ENCODE measurements at regions of chr14 and their contacts with region 1.

Region 1: GRCh38 chr14:68911594-68912227 is 67.4 kb downstream of the ACTN1 start:
- DNase-seq: peak; percentile 56
- H3K4me3 ChIP-seq: no peak overlapping the region
- H3K27ac ChIP-seq: peak overlapping the region; percentile 47
- H3K27me3 ChIP-seq: no peaks in the 10 kb centered on the region
- CTCF ChIP-seq: peak; percentile 100

Region 2: GRCh38 chr14:68520637-68521556 is 390.8 kb before region 1 on chr14:
- CTCF ChIA-PET with region 1: no interaction called
- POLR2A ChIA-PET with region 1: no interaction called
- DNase-seq: no peak
- H3K4me3 ChIP-seq: no peak overlapping the region
- H3K27ac ChIP-seq: no peak overlapping the region
- H3K27me3 ChIP-seq: no peaks in the 10 kb centered on the region
- CTCF ChIP-seq: no peak

Region 3: DNA sequence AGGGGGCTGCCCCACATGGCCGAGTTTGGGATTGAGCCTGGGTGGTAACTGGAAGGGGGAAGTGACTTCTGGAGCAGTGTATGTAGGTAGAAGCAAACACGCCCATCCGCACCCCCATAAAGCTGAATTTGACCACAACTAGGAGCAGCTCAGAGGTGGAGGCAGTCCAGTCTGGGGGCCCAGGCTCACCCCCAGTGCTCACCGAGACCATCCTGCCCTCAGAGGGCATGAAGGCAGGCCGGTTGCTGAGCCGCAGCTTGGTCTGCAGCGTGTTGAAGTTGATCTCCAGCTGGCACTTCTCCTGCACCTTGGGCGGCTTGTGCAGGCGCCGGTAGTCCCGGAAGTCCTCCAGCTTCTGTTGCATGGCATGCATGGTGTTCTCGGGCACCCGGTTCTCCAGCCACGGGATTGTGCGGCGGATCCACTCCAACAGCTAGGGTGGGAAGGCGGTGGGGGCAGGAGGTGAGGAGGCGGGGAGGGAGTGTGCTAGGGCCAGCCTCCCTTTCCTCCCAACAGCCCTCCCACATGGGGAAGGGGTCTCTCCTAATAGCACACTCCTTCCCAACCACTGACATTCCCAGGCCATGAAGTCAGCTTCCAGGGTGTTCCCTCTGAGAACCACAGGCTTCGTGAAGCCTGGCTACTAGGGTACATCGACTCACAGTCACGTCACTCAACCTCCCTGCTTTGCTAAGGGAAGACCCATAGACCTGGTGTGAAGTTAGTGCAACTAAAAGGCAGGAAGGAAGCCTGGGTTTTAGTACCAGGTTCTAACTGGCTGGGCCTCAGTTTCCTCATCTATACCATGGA is 19.7 kb before region 1 on chr14:
- CTCF ChIA-PET with region 1: interaction called, 19 read pairs
- POLR2A ChIA-PET with region 1: no interaction called
- DNase-seq: no peak
- H3K4me3 ChIP-seq: no peak overlapping the region
- H3K27ac ChIP-seq: peak overlapping the region; percentile 47
- H3K27me3 ChIP-seq: no peaks in the 10 kb centered on the region
- CTCF ChIP-seq: no peak

Region 4: DNA sequence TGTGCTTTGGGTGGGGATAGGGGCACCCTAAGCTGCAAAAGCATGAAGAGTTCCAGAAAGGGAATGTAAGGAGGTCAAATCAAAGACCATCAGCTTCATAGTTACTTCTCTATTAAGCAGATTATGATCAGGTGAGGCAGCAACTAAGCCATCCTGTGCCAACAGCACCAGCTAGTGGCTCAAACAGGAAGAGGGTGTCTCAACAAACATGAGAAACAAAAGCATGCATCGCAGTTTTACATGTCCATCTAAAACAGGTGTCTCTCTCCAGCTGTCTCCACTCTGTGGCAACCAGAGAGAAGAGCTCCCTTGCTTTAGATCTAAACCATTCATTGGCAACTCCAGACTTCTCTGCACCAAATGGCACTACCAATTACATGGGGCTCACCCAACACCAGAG is 14.5 kb after region 1 on chr14:
- CTCF ChIA-PET with region 1: interaction called, 13 read pairs
- POLR2A ChIA-PET with region 1: no interaction called
- DNase-seq: no peak
- H3K4me3 ChIP-seq: no peak overlapping the region
- H3K27ac ChIP-seq: no peak overlapping the region
- H3K27me3 ChIP-seq: no peaks in the 10 kb centered on the region
- CTCF ChIP-seq: peak; percentile 55

Region 5: GRCh38 chr14:68951042-68951914 is 39.6 kb after region 1 on chr14:
- CTCF ChIA-PET with region 1: interaction called, 16 read pairs
- POLR2A ChIA-PET with region 1: no interaction called
- DNase-seq: peak; percentile 81
- H3K4me3 ChIP-seq: peak overlapping the region; percentile 13; the same call in 1 of the 2 replicates
- H3K27ac ChIP-seq: peak overlapping the region; percentile 90
- H3K27me3 ChIP-seq: no peaks in the 10 kb centered on the region
- CTCF ChIP-seq: no peak

Region 6: GRCh38 chr14:69090187-69090789 is 178.6 kb after region 1 on chr14:
- CTCF ChIA-PET with region 1: interaction called, 10 read pairs
- POLR2A ChIA-PET with region 1: no interaction called
- DNase-seq: no peak
- H3K4me3 ChIP-seq: no peak overlapping the region
- H3K27ac ChIP-seq: no peak overlapping the region
- H3K27me3 ChIP-seq: no peaks in the 10 kb centered on the region
- CTCF ChIP-seq: peak; percentile 85

Region 7: DNA sequence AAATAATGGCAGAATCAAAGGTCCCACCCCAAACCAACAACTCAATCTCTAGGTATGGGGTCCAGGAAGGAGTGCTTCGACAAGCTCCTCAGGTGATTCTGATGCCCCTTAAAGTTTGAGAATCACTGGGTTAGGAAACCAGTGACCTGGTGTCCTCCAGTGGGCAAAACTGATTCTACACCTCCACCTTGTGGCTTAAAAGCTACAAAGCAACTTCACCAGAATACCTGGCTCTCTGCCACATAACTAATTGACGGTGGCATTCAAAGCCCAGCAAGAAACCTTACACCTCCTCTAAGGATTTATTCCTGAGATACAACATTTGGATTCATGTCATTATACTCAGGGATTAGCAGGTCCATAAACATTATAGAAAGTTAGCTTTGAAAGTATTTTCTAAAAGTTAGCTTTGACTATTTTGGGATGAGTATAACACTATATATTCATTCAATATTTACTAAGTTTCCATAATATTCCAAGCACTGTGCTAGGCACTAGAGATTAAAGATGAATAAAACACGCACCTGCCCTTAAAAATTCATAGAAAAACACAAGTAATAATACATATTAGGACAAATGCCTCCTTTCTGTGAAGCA is 195.8 kb after region 1 on chr14:
- CTCF ChIA-PET with region 1: interaction called, 53 read pairs
- POLR2A ChIA-PET with region 1: no interaction called
- DNase-seq: peak; percentile 51
- H3K4me3 ChIP-seq: no peak overlapping the region
- H3K27ac ChIP-seq: no peak overlapping the region
- H3K27me3 ChIP-seq: no peaks in the 10 kb centered on the region
- CTCF ChIP-seq: peak; percentile 73

Measured in AG04450 (cell line).